ENCODE measurements at regions of chr7 and their contacts with region 1.

Region 1: GRCh38 chr7:132580717-132581285 is 4.5 kb upstream of the PLXNA4 start:
- DNase-seq: peak; percentile 77
- CTCF ChIP-seq: peak; percentile 84

Region 2: GRCh38 chr7:132234711-132235110 is 346.1 kb before region 1 on chr7:
- in situ Hi-C with region 1: no loop called
- DNase-seq: no peak
- CTCF ChIP-seq: no peak

Region 3: GRCh38 chr7:132318352-132319318 is 262.2 kb before region 1 on chr7:
- in situ Hi-C with region 1: loop called (anchors 25 kb)
- DNase-seq: peak; percentile 84
- CTCF ChIP-seq: peak; percentile 90

Region 4: DNA sequence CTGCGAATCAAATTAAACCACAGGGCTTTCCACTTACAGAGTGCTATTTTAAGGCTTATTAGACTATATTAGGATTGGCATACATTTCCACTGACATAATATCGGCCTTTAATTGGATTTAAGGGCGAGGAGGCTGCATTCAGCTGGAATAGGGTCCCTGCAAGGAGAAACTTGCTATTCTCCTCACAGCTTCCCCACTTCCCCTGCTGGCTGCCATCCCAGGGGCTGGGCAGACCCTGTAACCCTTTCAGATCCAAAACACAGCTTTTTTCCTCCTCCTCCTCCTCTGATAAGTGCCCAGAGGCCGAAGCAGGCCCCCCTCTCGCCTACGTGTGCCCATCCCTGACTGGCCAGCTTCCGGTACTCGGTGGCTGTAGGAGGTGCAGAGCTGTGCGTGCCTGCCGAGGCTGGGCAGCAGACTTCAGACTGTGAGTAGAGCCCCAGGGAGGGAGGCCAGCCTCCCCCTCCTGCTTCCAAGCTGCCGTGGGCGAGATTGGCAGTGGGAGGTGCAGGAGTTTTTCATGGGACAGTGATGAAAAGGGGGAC is 228.8 kb before region 1 on chr7:
- in situ Hi-C with region 1: no loop called
- DNase-seq: no peak
- CTCF ChIP-seq: no peak